ENCODE measurements at regions of chr4 and their contacts with region 1.

Region 1: DNA sequence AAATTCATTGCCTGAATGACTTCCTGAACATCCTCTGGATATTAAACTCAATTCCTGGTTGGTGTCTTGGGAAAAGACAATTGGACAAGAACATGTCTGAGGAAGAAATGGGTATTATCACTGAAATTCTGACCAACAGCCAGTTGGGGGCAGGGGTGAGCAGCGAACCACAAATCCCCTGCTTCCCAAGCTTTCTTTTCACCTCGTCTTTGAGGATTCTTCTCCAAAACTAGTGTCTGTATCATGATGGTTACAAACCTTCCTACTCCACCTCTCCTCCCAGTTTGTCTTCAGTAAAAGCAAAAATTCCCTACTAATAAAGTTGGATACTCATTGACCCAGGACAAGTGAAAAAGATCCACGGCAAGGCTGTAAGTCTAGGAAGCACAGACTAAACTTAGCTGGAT is 48.3 kb upstream of the WDR1 start:
- DNase-seq: peak; percentile 48

Region 2: DNA sequence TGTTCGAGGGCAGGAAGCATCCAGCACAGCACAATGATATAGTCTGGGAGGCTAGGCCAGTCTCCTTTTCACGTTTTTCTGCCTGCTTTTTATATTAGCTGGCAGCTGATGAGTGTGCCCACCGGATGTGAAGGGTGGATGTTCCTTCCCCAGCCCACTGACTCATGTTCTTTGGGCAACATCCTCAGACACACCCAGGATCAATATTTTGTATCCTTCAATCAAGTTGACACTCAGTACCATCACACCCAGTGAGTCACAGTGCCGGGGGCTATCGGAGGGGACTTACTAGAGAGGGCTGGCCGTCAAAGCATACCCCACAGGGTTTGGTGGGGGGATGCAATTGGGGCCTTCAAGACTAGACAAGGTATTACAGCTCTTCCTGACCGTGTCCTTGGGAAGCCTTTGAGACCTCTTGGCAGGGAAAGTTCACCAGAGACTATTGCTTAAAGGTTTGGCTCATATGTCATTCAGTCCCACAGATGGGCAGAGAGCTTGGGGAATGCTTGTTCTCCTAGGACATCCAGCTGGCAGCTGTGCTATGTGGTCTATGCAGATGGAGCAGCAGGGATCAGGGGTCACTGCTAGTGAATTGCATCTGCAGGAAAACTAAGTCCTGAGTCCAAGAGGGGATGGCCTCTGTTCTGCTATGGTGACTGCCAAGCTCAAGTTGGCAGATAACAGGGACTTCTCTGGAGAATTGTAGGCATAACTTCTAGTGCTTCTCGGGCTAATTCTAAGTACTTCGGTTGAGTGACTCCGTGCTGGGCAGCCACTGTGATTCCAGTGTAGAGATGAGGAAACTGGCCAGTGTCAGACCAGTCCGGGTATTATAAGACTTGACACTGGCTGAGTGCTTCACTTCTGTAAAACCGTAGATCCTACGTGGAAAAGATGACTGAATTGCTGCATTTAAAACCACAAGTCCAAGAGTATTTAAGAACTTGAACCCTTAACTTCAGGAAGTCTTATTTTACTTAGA is 35.4 kb before region 1 on chr4:
- CTCF ChIA-PET with region 1: no interaction called
- POLR2A ChIA-PET with region 1: no interaction called
- DNase-seq: no peak

Region 3: GRCh38 chr4:10403633-10404445 is 239.0 kb after region 1 on chr4:
- CTCF ChIA-PET with region 1: interaction called, 13 read pairs
- POLR2A ChIA-PET with region 1: no interaction called
- DNase-seq: no peak

Region 4: DNA sequence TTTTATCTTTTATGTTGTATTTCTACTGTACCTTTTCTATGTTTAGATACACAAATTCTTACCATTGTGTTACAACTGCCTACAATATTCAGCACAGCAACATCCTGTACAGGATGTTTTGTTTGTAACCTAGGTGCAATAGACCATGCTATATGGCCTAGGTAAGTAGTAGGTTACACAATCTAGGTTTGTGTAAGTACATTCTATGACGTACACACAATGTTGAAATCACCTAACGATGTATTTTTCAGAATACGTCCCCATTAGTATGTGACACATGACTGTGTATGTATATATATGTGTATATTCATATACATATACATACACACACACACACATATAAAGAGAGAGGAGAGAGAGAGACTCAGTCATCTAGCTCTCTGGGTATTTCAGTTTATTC is 416.1 kb after region 1 on chr4:
- CTCF ChIA-PET with region 1: interaction called, 11 read pairs
- POLR2A ChIA-PET with region 1: no interaction called
- DNase-seq: no peak

Region 5: DNA sequence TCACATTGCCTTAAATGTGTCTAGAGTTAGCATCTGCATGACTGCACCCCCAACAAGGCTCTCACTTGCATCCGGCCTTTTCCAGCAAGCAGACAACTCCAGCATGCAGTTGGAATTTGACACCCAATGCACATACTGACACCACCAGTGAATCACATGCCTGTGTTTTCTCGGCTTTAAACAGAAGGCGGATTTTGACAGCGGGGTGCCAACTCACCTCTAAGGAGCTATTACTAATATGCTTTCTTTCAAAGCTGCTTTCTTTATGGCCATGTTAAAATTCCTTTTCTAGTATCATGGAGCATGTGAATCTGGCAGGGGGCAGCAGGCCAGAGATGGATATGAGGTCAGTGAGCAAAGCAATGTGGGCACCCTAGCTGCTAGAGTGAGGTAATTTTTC is 597.7 kb after region 1 on chr4:
- CTCF ChIA-PET with region 1: no interaction called
- POLR2A ChIA-PET with region 1: no interaction called
- DNase-seq: no peak

Measured in HEK293T (cell line).